ENCODE measurements at regions of chr1 and their contacts with region 1.

Region 1: DNA sequence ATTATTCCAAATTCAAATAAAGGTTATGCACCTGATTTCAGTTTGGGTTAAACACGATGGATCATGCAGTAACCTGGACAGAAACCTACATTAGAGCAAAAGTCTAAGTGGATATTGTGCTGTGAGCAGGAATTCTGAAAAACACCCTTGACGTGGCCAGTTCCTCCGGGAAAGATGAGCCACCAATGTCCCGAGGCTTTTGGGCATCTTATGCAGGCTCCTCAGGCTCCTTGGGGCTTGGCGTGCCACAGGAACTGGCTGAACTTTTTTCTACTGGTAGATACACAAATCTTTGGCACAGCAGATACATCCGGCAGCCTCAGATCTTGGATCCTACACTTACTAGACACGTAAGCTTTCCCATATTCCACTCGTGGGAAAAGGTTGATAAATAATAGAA is 34.5 kb downstream of the KMO start:
- DNase-seq: no peak
- H3K4me3 ChIP-seq: no peak overlapping the region
- H3K4me3 Mint-ChIP-seq: no peak overlapping the region
- H3K27ac ChIP-seq: no peak overlapping the region
- H3K27ac Mint-ChIP-seq: no peak overlapping the region
- H3K4me1 ChIP-seq: peaks cover 9 to 10% of the 10 kb centered on the region in 2 donors
- H3K4me1 Mint-ChIP-seq: peaks cover 16% of the 10 kb centered on the region
- H3K27me3 ChIP-seq: no peaks in the 10 kb centered on the region
- H3K27me3 Mint-ChIP-seq: peaks cover 2 to 3% (median 3%) of the 10 kb centered on the region in 3 donors
- CTCF ChIP-seq: no peak

Region 2: GRCh38 chr1:241577871-241578270 is 11.2 kb after region 1 on chr1:
- intact Hi-C with region 1: loop called in 1 of 2 experiments (anchors 1 kb)
- DNase-seq: no peak
- H3K4me3 ChIP-seq: no peak overlapping the region
- H3K4me3 Mint-ChIP-seq: no peak overlapping the region
- H3K27ac ChIP-seq: no peak overlapping the region
- H3K27ac Mint-ChIP-seq: no peak overlapping the region
- H3K4me1 ChIP-seq: no peaks in the 10 kb centered on the region
- H3K4me1 Mint-ChIP-seq: no peaks in the 10 kb centered on the region
- H3K27me3 ChIP-seq: no peaks in the 10 kb centered on the region
- H3K27me3 Mint-ChIP-seq: no peaks in the 10 kb centered on the region
- CTCF ChIP-seq: no peak

Measured in CD14-positive monocyte (primary cell).